ENCODE measurements at regions of chr6 and their contacts with region 1.

Region 1: DNA sequence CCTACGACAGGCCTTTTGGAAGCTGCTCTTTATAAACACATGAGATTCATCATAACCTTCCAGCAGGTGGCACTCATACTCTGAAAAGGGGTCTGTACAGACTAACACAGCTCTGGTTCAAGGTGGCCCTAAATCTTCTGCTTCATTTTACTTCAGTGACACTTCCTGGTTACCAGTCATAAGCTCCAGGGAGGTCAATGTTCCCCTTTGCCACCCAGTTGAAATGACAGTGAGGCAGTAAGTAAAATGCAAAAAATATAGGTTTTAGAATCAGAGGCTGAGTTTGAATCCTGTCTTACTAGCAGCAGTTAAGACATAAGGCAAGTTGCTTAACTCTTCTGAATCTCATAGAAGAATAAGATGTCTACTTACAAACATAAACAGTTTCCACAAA is 132.8 kb downstream of the CDK19 start:
- DNase-seq: peak; percentile 86
- ATAC-seq: peak; percentile 99
- H3K4me3 Mint-ChIP-seq: no peak overlapping the region
- H3K27ac Mint-ChIP-seq: peak overlapping the region; percentile 65
- H3K4me1 Mint-ChIP-seq: peaks cover 15% of the 10 kb centered on the region
- H3K27me3 Mint-ChIP-seq: no peaks in the 10 kb centered on the region

Region 2: DNA sequence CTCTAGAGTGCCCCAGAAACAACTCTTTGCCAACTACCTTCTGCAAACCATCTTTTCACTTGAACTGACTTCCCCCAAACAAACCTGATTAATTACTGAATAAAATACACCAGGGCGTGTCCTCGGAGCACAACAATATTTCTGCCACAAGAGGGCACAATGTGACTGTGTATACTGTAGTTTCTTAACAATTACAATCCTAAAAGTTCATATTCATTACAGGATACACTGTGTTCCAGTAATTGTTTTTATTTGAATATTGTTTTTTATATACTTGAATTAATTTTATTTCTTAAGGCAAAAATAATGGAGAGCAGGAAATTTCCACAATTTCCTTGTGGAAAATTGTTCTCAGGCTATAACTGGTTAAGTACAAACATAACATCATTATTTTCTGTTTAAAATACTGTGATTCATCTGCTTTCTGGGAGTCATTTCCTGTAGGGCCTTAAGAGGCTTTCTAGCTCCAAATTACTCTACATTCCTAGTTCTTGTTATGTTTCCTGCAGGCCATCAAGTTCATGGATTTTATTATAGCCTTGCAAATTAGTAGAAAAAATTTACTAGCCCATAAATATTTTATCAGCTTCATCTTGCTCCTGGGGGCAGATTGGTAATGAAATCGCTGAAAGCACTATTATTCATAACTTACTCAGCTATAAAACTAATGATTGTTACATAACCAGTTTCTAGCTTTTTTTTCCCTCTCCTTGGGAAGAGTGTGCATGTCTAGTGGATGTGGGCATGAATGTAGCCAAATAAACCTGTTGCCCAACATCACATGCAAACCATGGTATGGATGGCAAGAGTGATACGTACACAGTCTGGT is 154.1 kb before region 1 on chr6:
- CTCF ChIA-PET with region 1: interaction called, 21 read pairs
- POLR2A ChIA-PET with region 1: no interaction called
- DNase-seq: peak; percentile 72
- ATAC-seq: peak; percentile 60
- H3K4me3 Mint-ChIP-seq: no peak overlapping the region
- H3K27ac Mint-ChIP-seq: no peak overlapping the region
- H3K4me1 Mint-ChIP-seq: peaks cover 5% of the 10 kb centered on the region
- H3K27me3 Mint-ChIP-seq: peaks cover 2% of the 10 kb centered on the region

Region 3: DNA sequence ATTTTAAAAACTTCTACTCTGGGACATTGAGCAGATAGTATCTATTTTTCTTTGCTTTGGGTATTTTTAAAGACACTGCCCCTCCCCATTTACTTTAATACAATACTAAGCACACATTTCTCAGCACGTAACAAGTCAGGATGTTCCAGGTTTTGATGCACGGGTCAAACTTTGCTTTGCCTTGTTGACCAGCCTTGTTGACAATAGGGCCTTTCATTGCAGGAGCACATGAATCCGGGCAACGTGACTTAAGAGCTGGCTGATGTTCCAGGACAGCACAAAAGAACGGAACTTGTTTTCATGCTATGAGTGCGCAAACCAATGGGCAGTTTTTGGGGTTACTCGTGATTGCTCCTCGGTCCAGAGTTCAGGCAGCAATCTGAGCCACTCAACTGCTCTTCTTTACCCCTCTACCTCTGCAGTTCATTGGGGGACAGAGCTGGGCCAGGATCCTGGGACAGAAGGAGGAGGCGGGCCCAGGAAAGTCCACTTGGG is 127.4 kb before region 1 on chr6:
- CTCF ChIA-PET with region 1: no interaction called
- POLR2A ChIA-PET with region 1: no interaction called
- DNase-seq: no peak
- ATAC-seq: no peak
- H3K4me3 Mint-ChIP-seq: no peak overlapping the region
- H3K27ac Mint-ChIP-seq: no peak overlapping the region
- H3K4me1 Mint-ChIP-seq: peaks cover 11% of the 10 kb centered on the region
- H3K27me3 Mint-ChIP-seq: no peaks in the 10 kb centered on the region

Region 4: GRCh38 chr6:110720066-110720465 is 37.6 kb after region 1 on chr6:
- CTCF ChIA-PET with region 1: no interaction called
- POLR2A ChIA-PET with region 1: no interaction called
- DNase-seq: no peak
- ATAC-seq: no peak
- H3K4me3 Mint-ChIP-seq: no peak overlapping the region
- H3K27ac Mint-ChIP-seq: no peak overlapping the region
- H3K4me1 Mint-ChIP-seq: no peaks in the 10 kb centered on the region
- H3K27me3 Mint-ChIP-seq: no peaks in the 10 kb centered on the region

Region 5: GRCh38 chr6:110882271-110882613 is 199.8 kb after region 1 on chr6:
- CTCF ChIA-PET with region 1: interaction called, 90 read pairs
- POLR2A ChIA-PET with region 1: interaction called, 8 read pairs
- DNase-seq: no peak
- ATAC-seq: no peak
- H3K4me3 Mint-ChIP-seq: no peak overlapping the region
- H3K27ac Mint-ChIP-seq: no peak overlapping the region
- H3K4me1 Mint-ChIP-seq: peaks cover 84% of the 10 kb centered on the region
- H3K27me3 Mint-ChIP-seq: no peaks in the 10 kb centered on the region

Region 6: DNA sequence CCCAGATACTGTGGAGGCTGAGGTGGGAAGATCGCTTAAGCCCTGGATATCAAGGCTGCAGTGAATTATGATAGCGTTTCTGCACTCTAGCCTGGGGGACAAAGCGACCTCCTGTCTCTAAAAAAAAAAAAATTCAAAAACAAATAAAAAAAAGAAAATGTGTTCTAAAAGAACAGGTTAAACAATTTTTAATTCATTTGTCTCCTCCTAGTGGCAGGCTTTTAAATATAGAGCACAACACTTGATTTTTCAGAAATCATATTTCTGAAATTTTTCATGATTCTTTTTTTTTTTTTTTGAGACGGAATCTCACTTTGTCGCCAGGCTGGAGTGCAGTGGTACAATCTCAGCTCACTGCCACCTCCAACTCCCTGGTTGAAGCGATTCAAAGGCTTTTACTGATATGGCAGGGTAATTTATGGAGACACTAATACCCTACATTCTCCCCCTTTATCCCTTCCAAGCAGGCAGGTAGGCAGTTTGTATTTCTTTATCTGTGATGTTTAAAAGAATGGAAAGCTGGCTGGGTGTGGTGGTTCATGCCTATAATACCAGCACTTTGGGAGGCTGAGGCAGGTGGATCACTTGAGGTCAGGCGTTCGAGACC is 267.3 kb after region 1 on chr6:
- CTCF ChIA-PET with region 1: interaction called, 50 read pairs
- POLR2A ChIA-PET with region 1: no interaction called
- DNase-seq: no peak
- ATAC-seq: no peak
- H3K4me3 Mint-ChIP-seq: no peak overlapping the region
- H3K27ac Mint-ChIP-seq: no peak overlapping the region
- H3K4me1 Mint-ChIP-seq: peaks cover 7% of the 10 kb centered on the region
- H3K27me3 Mint-ChIP-seq: peaks cover 8% of the 10 kb centered on the region

Region 7: GRCh38 chr6:110981202-110981600 is 298.7 kb after region 1 on chr6:
- CTCF ChIA-PET with region 1: interaction called, 12 read pairs
- POLR2A ChIA-PET with region 1: no interaction called
- DNase-seq: no peak
- ATAC-seq: peak; percentile 1
- H3K4me3 Mint-ChIP-seq: peak overlapping the region; percentile 97
- H3K27ac Mint-ChIP-seq: peak overlapping the region; percentile 99
- H3K4me1 Mint-ChIP-seq: peaks cover 32% of the 10 kb centered on the region
- H3K27me3 Mint-ChIP-seq: no peaks in the 10 kb centered on the region

Measured in activated CD8-positive, alpha-beta T cell treated with anti-CD3 and anti-CD28 coated beads, Interleukin-2, amount 10 ng/mL, durations not matched to agents 7 days and 5 days (primary cell).